ENCODE measurements at regions of chr10 and their contacts with region 1.

Region 1: GRCh38 chr10:61750929-61751471 is 88.3 kb downstream of the CABCOCO1 start:
- DNase-seq: peak; percentile 13
- H3K4me3 ChIP-seq: no peak overlapping the region
- H3K27ac ChIP-seq: peak overlapping the region; percentile 23
- H3K27me3 ChIP-seq: no peaks in the 10 kb centered on the region
- CTCF ChIP-seq: peak; percentile 81

Region 2: GRCh38 chr10:60662917-60663614 is 1087.9 kb before region 1 on chr10:
- CTCF ChIA-PET with region 1: no interaction called
- POLR2A ChIA-PET with region 1: no interaction called
- DNase-seq: no peak
- H3K4me3 ChIP-seq: no peak overlapping the region
- H3K27ac ChIP-seq: no peak overlapping the region
- H3K27me3 ChIP-seq: no peaks in the 10 kb centered on the region
- CTCF ChIP-seq: no peak

Region 3: DNA sequence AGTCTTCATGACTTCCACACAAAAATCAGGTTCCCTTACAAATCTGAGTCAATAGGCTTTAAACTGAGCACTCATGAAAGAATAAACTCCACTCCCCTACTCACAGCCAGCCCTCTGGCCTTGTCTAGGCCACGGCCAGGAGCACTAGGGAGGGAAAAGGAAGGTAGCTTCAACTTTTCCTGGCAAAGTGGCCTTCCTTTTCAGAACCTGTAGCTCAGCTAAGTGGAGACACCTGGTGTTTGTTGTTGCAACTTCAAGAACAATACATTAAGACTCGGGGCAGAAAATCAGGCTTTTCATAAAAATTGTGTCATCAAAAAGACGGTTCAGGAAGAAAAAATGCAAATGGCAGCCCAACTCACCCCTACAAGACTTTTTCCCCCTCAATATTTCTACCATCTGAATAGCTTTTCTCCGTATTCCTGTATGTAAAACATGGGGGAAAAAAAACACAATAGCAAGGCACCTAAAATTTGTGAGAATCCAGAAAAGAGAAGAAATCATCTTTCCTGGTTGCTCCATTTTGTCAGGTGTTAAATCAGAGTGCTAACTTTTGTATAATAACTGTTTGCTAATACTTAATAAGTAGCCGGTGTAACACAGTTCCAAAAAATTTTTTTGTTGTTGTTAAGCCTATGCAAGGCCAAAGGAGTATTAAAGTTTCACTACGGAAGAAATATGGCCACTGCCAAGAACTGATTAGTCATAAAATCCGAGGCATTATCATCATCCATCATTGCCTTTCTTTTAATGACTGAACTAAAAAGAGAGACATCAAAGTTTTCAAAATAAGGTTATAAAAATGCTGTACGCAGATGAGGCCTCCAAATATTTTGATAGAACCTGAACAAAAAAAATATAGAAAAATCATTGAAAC is 84.3 kb after region 1 on chr10:
- CTCF ChIA-PET with region 1: interaction called, 10 read pairs
- POLR2A ChIA-PET with region 1: no interaction called
- DNase-seq: peak; percentile 38
- H3K4me3 ChIP-seq: no peak overlapping the region
- H3K27ac ChIP-seq: no peak overlapping the region
- H3K27me3 ChIP-seq: no peaks in the 10 kb centered on the region
- CTCF ChIP-seq: peak; percentile 59